Dorsolateral prefrontal cortex (tissue), 120 donors: ENCODE measurements at regions of chr22 and their contacts with region 1.

Region 1: GRCh38 chr22:45163451-45164269 is at the start of gene NUP50:
- DNase-seq: peak; percentile 81 to 94 (median 87)
- H3K4me3 ChIP-seq: peak within 1 kb of the TSS; percentile 56 to 100 (median 86)
- H3K27ac ChIP-seq: peak within 1 kb of the TSS in 56 of 59 donors; percentile 13 to 92 (median 78)
- H3K27me3 ChIP-seq: no peaks in the 10 kb centered on the region
- CTCF ChIP-seq: peak in 36 of 56 donors; percentile 9 to 63 (median 34)
- total RNA-seq, gene NUP50: 27.1 to 82.5 (median 51.9) TPM

Region 2: DNA sequence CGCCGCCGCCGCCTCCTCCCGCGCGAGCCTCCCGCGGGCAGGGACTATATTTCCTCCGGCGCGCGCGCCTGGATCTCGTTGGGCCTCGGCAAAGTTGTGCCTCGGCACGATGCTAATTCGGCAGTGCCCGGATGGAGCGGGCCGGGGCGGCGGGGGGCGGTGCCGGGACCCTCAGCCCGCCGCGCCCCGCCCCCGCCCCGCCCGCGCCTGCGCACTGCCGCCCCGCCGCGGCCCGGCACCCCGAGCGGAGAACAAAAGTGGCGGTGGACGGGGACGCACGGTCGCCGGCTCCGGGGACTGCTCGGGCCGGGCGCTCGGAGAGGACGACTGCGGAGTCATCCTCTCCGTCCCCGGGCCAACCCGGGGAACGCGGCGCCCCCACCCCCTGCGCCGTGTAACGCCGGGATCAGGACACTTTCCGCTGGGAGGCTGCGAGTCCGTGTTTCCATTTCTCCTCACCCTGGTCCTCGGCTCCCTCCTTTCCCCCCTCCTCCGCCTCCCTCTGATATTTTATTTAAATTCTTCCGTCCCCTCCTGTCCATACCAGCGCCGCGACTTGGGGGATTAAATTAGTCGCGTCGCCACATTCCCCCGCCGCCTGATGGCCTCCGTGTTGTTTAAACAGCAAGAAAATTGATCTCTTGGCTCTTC is 153.7 kb before region 1 on chr22 and contains the start of gene PHF21B:
- intact Hi-C with region 1: loop called in 1 of 2 experiments (anchors 5 kb)
- DNase-seq: peak in 8 of 10 donors; percentile 18 to 80 (median 71)
- H3K4me3 ChIP-seq: peak within 1 kb of the TSS; percentile 44 to 80 (median 68)
- H3K27ac ChIP-seq: peak within 1 kb of the TSS in 53 of 59 donors; percentile 2 to 91 (median 73)
- H3K27me3 ChIP-seq: peaks cover 0 to 22% (median 0%) of the 10 kb centered on the region in 45 donors
- CTCF ChIP-seq: peak in 2 of 56 donors; percentile 2 to 8
- total RNA-seq, gene PHF21B: 5.0 to 39.2 (median 12.3) TPM

Region 3: DNA sequence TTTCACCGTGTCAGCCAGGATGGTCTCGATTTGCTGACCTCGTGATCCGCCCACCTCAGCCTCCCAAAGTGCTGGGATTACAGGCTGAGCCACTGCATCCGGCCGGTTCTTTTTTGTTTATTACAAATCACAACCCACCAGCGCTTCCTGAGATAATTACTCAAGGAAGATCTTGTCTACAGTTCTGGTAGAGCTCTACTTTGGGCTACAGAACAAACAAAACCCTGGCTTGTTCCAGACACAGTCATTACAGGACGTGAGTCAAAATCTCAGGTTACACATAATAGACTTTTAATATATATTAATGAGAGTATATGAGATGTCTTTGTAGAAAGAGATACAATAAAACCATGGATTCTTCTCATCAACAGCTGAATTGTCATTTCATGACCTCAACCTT is 42.7 kb before region 1 on chr22:
- intact Hi-C with region 1: no loop called
- DNase-seq: no peak
- H3K4me3 ChIP-seq: no peak overlapping the region
- H3K27ac ChIP-seq: no peak overlapping the region
- H3K27me3 ChIP-seq: no peaks in the 10 kb centered on the region
- CTCF ChIP-seq: no peak

Region 4: DNA sequence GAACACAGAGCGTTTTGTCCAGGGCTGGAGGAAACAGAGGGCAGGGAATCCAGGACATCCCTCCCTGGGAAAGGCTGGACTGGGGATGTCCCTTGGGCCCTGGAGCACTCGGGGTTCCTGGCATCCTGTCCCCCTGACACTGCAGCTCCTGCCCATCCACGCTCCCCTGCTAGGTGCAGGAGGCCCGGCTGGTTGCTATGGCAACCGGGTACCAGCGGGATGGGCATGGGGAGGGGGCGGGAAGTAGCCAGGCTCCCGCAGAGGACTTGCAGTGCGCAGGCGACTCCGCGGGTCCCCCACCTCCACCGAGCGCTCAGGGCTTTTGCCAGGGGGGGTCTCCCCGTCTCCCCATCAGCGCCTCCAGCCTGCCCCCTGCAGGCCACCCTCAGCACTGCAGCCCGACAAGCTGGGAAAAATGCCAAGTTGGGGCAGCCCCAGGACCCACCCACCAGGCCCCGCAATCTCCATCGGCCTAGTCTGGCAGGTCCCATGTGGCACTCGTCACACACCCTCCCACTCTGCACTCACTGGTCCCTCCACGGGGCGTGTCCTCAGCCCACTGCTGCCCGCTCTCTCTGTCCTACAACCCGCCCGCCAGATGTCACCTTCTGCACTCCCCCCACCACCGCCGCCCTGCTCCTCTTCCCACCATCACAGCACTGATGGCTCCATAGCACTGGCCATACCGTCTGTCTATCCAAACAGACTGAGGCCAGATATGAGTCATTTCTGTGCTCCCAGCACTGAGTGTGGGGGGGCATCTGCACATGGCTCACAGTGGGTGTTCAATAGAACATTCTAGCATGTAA is 45.5 kb after region 1 on chr22:
- intact Hi-C with region 1: loop called (anchors 2 to 5 kb)
- DNase-seq: peak; percentile 50 to 91 (median 82)
- H3K4me3 ChIP-seq: peak overlapping the region in 58 of 59 donors; percentile 11 to 82 (median 69)
- H3K27ac ChIP-seq: peak overlapping the region; percentile 60 to 100 (median 96)
- H3K27me3 ChIP-seq: no peaks in the 10 kb centered on the region
- CTCF ChIP-seq: peak; percentile 49 to 94 (median 76)

Region 5: GRCh38 chr22:45240810-45241631 is 77.4 kb after region 1 on chr22 and contains the start of gene KIAA0930:
- intact Hi-C with region 1: loop called (anchors 10 kb)
- DNase-seq: peak in 9 of 10 donors; percentile 51 to 80 (median 67)
- H3K4me3 ChIP-seq: peak within 1 kb of the TSS; percentile 55 to 92 (median 80)
- H3K27ac ChIP-seq: peak within 1 kb of the TSS in 55 of 59 donors; percentile 12 to 89 (median 69)
- H3K27me3 ChIP-seq: no peaks in the 10 kb centered on the region
- CTCF ChIP-seq: no peak
- total RNA-seq, gene KIAA0930: 174 to 603 (median 325) TPM

Region 6: GRCh38 chr22:45290410-45290936 is 126.8 kb after region 1 on chr22:
- intact Hi-C with region 1: no loop called
- DNase-seq: no peak
- H3K4me3 ChIP-seq: peak overlapping the region in 3 of 59 donors; percentile 5 to 22 (median 5)
- H3K27ac ChIP-seq: no peak overlapping the region
- H3K27me3 ChIP-seq: no peaks in the 10 kb centered on the region
- CTCF ChIP-seq: no peak

Region 7: DNA sequence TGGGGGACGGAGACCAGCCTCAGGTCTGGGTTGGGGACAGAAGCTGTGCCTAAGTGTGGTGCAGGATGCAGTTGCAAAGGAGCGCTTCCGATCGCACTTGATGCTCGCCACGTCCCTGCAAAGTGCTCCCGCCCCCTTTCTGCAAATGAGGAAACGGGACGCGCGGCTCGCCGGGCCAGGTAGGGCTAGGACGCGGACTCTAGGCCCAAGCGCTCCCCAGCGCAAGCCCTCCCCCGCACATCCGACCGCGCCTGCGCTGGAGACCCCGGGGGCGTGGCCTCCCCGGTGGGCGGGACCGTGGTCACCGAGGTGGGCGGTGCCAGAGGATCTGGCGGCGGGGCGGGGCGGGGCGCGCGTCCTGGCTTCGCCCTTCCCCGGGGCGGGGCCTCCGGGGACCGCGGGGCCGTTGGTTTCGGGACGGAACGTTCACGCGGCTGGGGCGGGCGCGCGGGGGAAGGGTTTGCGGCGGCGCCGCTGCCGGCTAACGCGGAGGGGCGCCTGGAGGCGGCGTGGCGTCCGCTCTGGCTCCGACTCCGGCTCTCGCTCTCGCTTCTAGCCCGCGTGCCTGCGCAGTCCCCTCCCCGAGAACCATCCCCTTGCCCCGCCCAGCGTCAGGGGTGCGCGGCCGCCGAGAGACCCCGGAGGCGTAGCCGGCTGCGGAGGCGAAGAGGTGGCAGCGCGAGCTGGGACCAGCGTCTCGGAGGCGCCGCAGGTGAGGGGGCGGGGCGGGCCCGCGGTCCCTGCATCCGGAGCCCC is 146.0 kb after region 1 on chr22 and contains the start of gene FAM118A:
- intact Hi-C with region 1: loop called in 1 of 2 experiments (anchors 2 kb)
- DNase-seq: peak; percentile 87 to 98 (median 94)
- H3K4me3 ChIP-seq: peak within 1 kb of the TSS; percentile 62 to 100 (median 92)
- H3K27ac ChIP-seq: peak within 1 kb of the TSS in 57 of 59 donors; percentile 2 to 93 (median 84)
- H3K27me3 ChIP-seq: no peaks in the 10 kb centered on the region
- CTCF ChIP-seq: peak in 40 of 56 donors; percentile 5 to 57 (median 26)
- total RNA-seq, gene FAM118A: 13.8 to 116 (median 36.6) TPM

Region 8: GRCh38 chr22:45435544-45436139 is 272.0 kb after region 1 on chr22:
- intact Hi-C with region 1: loop called in 1 of 2 experiments (anchors 5 kb)
- DNase-seq: peak; percentile 75 to 88 (median 82)
- H3K4me3 ChIP-seq: peak overlapping the region in 11 of 59 donors; percentile 10 to 35 (median 19)
- H3K27ac ChIP-seq: peak overlapping the region in 19 of 59 donors; percentile 7 to 71 (median 36)
- H3K27me3 ChIP-seq: no peaks in the 10 kb centered on the region
- CTCF ChIP-seq: peak; percentile 90 to 99 (median 98)